ENCODE measurements at regions of chr5 and their contacts with region 1.

Region 1: GRCh38 chr5:170100066-170100943 is 5.4 kb upstream of the FOXI1 start:
- DNase-seq: peak; percentile 66
- ATAC-seq: no peak
- H3K4me3 ChIP-seq: no peak overlapping the region
- H3K4me3 Mint-ChIP-seq: no peak overlapping the region
- H3K27ac ChIP-seq: no peak overlapping the region
- H3K27ac Mint-ChIP-seq: no peak overlapping the region
- H3K4me1 ChIP-seq: no peaks in the 10 kb centered on the region
- H3K4me1 Mint-ChIP-seq: no peaks in the 10 kb centered on the region
- H3K27me3 ChIP-seq: peaks cover 0 to 2% (median 0%) of the 10 kb centered on the region in 4 experiments
- H3K27me3 Mint-ChIP-seq: peaks cover 13% of the 10 kb centered on the region
- CTCF ChIP-seq: peak; percentile 71

Region 2: DNA sequence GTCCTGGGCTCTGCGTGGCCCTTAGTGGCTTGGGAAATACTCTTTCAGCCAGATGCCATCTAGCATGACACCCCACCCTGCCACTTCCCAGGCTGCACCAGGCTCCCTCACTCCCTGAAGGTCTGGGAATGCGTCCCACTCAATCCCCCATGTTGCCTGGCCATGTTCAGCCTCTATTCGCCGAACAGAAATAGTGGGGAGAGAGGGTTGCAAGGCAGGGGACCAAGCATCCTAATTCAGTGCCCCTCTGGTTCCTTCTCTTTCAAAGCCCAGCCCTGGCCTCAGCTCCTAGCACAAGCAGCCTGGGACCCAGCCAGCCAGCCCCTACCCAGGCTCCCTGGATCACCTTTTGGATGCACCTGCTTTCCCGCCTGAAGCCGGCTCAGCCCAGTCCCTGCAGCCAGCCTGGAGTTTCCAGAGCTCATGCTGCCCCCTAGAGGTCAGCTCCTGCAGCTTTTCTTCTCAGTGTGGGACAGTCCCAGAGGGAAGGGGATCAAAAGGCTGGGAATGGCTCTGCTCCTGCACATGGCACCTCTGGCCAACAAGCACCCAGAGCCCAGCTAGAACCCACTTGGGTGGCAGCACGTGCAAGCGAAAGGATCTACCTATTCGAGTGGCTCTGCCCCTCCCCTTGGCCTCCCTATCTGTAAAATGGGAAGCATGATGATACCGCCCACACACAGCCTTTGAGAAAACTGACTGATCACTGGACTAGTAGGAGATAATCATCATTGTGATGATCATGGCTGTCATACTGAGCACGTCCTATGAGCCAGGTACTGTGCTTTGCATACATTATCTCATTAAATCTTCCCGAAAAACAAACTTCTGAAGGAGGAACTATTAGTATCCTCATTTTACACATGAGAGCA is 83.7 kb after region 1 on chr5:
- CTCF ChIA-PET with region 1: interaction called, 16 read pairs
- POLR2A ChIA-PET with region 1: no interaction called
- intact Hi-C with region 1: no loop called
- DNase-seq: peak; percentile 30
- ATAC-seq: peak; percentile 31
- H3K4me3 ChIP-seq: no peak overlapping the region
- H3K4me3 Mint-ChIP-seq: no peak overlapping the region
- H3K27ac ChIP-seq: no peak overlapping the region
- H3K27ac Mint-ChIP-seq: no peak overlapping the region
- H3K4me1 ChIP-seq: no peaks in the 10 kb centered on the region
- H3K4me1 Mint-ChIP-seq: no peaks in the 10 kb centered on the region
- H3K27me3 ChIP-seq: no peaks in the 10 kb centered on the region
- H3K27me3 Mint-ChIP-seq: peaks cover 6% of the 10 kb centered on the region
- CTCF ChIP-seq: peak; percentile 60

Region 3: DNA sequence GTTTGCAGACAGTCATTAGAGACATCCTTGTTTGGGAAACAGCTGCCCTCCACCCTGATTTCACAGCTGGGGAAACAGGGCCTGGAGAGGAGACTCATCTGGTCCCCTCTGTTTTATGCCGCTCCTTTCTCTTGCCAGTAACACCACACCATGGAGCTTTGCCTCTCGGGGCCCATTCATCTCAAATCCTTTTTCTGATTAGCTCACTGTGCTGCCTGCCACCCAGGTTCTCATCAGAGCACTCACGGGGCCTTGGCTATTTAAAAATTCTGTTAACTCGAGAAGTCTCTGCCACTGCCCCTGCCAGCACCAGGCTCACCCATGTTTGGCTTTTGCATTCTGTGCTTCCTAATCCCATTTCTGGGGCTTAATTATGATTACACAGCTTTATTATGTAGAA is 95.7 kb after region 1 on chr5:
- CTCF ChIA-PET with region 1: no interaction called
- POLR2A ChIA-PET with region 1: no interaction called
- intact Hi-C with region 1: no loop called
- DNase-seq: no peak
- ATAC-seq: no peak
- H3K4me3 ChIP-seq: no peak overlapping the region
- H3K4me3 Mint-ChIP-seq: no peak overlapping the region
- H3K27ac ChIP-seq: no peak overlapping the region
- H3K27ac Mint-ChIP-seq: no peak overlapping the region
- H3K4me1 ChIP-seq: no peaks in the 10 kb centered on the region
- H3K4me1 Mint-ChIP-seq: no peaks in the 10 kb centered on the region
- H3K27me3 ChIP-seq: peaks cover 0 to 3% (median 0%) of the 10 kb centered on the region in 4 experiments
- H3K27me3 Mint-ChIP-seq: peaks cover 15% of the 10 kb centered on the region
- CTCF ChIP-seq: no peak

Region 4: GRCh38 chr5:170206216-170206615 is 105.9 kb after region 1 on chr5:
- CTCF ChIA-PET with region 1: no interaction called
- POLR2A ChIA-PET with region 1: no interaction called
- intact Hi-C with region 1: loop called (anchors 5 kb)
- DNase-seq: no peak
- ATAC-seq: no peak
- H3K4me3 ChIP-seq: no peak overlapping the region
- H3K4me3 Mint-ChIP-seq: no peak overlapping the region
- H3K27ac ChIP-seq: no peak overlapping the region
- H3K27ac Mint-ChIP-seq: no peak overlapping the region
- H3K4me1 ChIP-seq: no peaks in the 10 kb centered on the region
- H3K4me1 Mint-ChIP-seq: no peaks in the 10 kb centered on the region
- H3K27me3 ChIP-seq: peaks cover 0 to 5% (median 0%) of the 10 kb centered on the region in 4 experiments
- H3K27me3 Mint-ChIP-seq: peaks cover 37% of the 10 kb centered on the region
- CTCF ChIP-seq: no peak

Region 5: GRCh38 chr5:170420780-170421412 is 320.6 kb after region 1 on chr5:
- CTCF ChIA-PET with region 1: interaction called, 8 read pairs
- POLR2A ChIA-PET with region 1: no interaction called
- intact Hi-C with region 1: loop called (anchors 1 kb)
- DNase-seq: peak; percentile 74
- ATAC-seq: peak; percentile 41
- H3K4me3 ChIP-seq: no peak overlapping the region
- H3K4me3 Mint-ChIP-seq: no peak overlapping the region
- H3K27ac ChIP-seq: no peak overlapping the region
- H3K27ac Mint-ChIP-seq: no peak overlapping the region
- H3K4me1 ChIP-seq: no peaks in the 10 kb centered on the region
- H3K4me1 Mint-ChIP-seq: no peaks in the 10 kb centered on the region
- H3K27me3 ChIP-seq: peaks cover 0 to 16% (median 6%) of the 10 kb centered on the region in 4 experiments
- H3K27me3 Mint-ChIP-seq: peaks cover 34% of the 10 kb centered on the region
- CTCF ChIP-seq: peak; percentile 78

Measured in B cell (primary cell).